Common myeloid progenitor, CD34-positive (primary cell): ENCODE measurements at regions of chr1 and their contacts with region 1.

Region 1: GRCh38 chr1:111507411-111508201 is 4.2 kb upstream of the ADORA3 start:
- DNase-seq: peak; percentile 89 to 97 (median 96)
- H3K4me3 ChIP-seq: peak overlapping the region in 6 of 7 experiments; percentile 35 to 72 (median 64)
- H3K27ac ChIP-seq: peak overlapping the region; percentile 84 to 93
- H3K4me1 ChIP-seq: peaks cover 37 to 97% (median 91%) of the 10 kb centered on the region in 4 experiments
- H3K27me3 ChIP-seq: no peaks in the 10 kb centered on the region

Region 2: GRCh38 chr1:111366256-111366655 is 141.3 kb before region 1 on chr1:
- CTCF ChIA-PET with region 1: no interaction called
- POLR2A ChIA-PET with region 1: no interaction called
- DNase-seq: no peak
- H3K4me3 ChIP-seq: no peak overlapping the region
- H3K27ac ChIP-seq: no peak overlapping the region
- H3K4me1 ChIP-seq: no peaks in the 10 kb centered on the region
- H3K27me3 ChIP-seq: peaks cover 2 to 15% (median 8%) of the 10 kb centered on the region in 5 experiments

Region 3: DNA sequence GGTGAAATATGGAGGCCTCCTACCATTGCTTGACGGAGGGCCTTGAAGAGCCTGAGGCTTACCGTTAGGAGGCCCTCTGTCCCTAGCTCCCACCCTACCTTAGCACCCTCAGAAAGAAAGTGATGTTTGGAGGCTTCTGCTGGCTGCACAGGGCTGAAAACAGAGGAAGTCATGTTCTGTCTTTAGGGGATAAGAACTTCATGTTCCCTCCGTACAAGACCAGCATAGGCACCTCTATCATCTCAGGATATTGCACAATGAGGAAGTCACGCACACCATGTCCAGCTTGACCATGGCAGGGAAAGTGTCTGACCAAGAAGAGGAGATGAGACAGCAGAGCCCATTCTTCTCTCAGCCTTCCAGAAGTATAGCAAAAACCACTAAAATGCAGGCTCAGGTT is 18.0 kb before region 1 on chr1:
- CTCF ChIA-PET with region 1: interaction called, 28 read pairs
- POLR2A ChIA-PET with region 1: interaction called, 3 read pairs
- DNase-seq: no peak
- H3K4me3 ChIP-seq: no peak overlapping the region
- H3K27ac ChIP-seq: no peak overlapping the region
- H3K4me1 ChIP-seq: peaks cover 0 to 26% (median 8%) of the 10 kb centered on the region in 4 experiments
- H3K27me3 ChIP-seq: no peaks in the 10 kb centered on the region

Region 4: DNA sequence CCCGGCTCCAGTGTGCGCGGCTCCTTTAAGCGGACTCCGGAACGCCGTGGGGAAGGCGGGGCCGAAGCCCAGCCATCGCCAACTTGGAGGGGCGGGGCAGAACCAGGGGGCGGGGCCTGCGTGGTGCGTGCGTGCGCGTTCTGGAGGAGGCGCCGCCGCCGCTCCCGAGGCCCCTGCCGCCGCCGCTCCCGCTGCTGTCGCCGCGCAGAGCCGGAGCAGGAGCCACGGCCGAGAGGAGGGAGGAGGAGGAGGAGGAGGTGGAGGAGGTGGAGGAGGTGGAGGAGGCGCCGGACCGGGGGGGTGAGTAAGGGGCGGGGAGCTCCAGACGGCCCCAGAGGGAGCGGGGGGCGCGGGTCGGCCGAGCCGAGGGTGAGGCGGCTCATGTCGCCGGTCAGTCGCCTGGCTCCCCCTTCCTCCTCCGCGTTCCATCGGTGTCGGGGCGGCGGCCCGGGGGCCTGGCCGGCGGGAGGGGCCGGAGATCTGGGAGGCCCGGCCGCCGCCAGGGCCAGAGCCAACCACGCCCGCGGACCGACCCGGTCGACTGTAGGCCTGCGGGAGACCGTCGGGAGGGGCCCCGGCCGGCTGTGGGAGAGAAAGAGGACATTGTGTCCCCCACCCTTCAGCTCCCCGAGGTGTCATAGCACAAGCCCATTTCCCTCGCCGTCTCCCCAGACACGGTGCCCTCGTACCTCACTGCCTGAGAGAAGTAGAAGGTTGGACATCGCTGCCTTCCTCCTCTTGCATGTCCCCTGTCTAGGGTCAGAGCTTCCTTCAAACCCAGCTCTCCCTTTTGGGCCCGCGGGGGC is 112.2 kb after region 1 on chr1 and contains the start of gene RAP1A:
- CTCF ChIA-PET with region 1: interaction called, 28 read pairs
- POLR2A ChIA-PET with region 1: interaction called, 7 read pairs
- DNase-seq: peak; percentile 87 to 91 (median 91)
- H3K4me3 ChIP-seq: peak within 1 kb of the TSS; percentile 55 to 91 (median 84)
- H3K27ac ChIP-seq: peak within 1 kb of the TSS; percentile 69 to 88
- H3K4me1 ChIP-seq: peaks cover 35 to 72% (median 57%) of the 10 kb centered on the region in 4 experiments
- H3K27me3 ChIP-seq: no peaks in the 10 kb centered on the region

Region 5: GRCh38 chr1:111656086-111657017 is 148.7 kb after region 1 on chr1:
- CTCF ChIA-PET with region 1: interaction called, 30 read pairs
- POLR2A ChIA-PET with region 1: interaction called, 7 read pairs
- DNase-seq: peak; percentile 52 to 60 (median 53)
- H3K4me3 ChIP-seq: no peak overlapping the region
- H3K27ac ChIP-seq: no peak overlapping the region
- H3K4me1 ChIP-seq: peaks cover 16 to 49% (median 31%) of the 10 kb centered on the region in 4 experiments
- H3K27me3 ChIP-seq: no peaks in the 10 kb centered on the region

Region 6: GRCh38 chr1:111690306-111690617 is 182.7 kb after region 1 on chr1:
- CTCF ChIA-PET with region 1: interaction called, 12 read pairs
- POLR2A ChIA-PET with region 1: no interaction called
- DNase-seq: peak in 2 of 3 donors; percentile 31 to 38
- H3K4me3 ChIP-seq: no peak overlapping the region
- H3K27ac ChIP-seq: no peak overlapping the region
- H3K4me1 ChIP-seq: peaks cover 0 to 3% (median 0%) of the 10 kb centered on the region in 4 experiments
- H3K27me3 ChIP-seq: no peaks in the 10 kb centered on the region

Region 7: GRCh38 chr1:111704776-111705175 is 197.2 kb after region 1 on chr1:
- CTCF ChIA-PET with region 1: no interaction called
- POLR2A ChIA-PET with region 1: no interaction called
- DNase-seq: no peak
- H3K4me3 ChIP-seq: no peak overlapping the region
- H3K27ac ChIP-seq: no peak overlapping the region
- H3K4me1 ChIP-seq: no peaks in the 10 kb centered on the region
- H3K27me3 ChIP-seq: no peaks in the 10 kb centered on the region

Region 8: GRCh38 chr1:112263453-112263852 is 755.8 kb after region 1 on chr1:
- CTCF ChIA-PET with region 1: no interaction called
- POLR2A ChIA-PET with region 1: no interaction called
- DNase-seq: peak; percentile 34 to 74 (median 64)
- H3K4me3 ChIP-seq: no peak overlapping the region
- H3K27ac ChIP-seq: no peak overlapping the region
- H3K4me1 ChIP-seq: peaks cover 0 to 7% (median 1%) of the 10 kb centered on the region in 4 experiments
- H3K27me3 ChIP-seq: peaks cover 0 to 2% (median 0%) of the 10 kb centered on the region in 5 experiments